Cardiac septum (tissue), 1 donor: ENCODE measurements at regions of chr4 and their contacts with region 1.

Region 1: DNA sequence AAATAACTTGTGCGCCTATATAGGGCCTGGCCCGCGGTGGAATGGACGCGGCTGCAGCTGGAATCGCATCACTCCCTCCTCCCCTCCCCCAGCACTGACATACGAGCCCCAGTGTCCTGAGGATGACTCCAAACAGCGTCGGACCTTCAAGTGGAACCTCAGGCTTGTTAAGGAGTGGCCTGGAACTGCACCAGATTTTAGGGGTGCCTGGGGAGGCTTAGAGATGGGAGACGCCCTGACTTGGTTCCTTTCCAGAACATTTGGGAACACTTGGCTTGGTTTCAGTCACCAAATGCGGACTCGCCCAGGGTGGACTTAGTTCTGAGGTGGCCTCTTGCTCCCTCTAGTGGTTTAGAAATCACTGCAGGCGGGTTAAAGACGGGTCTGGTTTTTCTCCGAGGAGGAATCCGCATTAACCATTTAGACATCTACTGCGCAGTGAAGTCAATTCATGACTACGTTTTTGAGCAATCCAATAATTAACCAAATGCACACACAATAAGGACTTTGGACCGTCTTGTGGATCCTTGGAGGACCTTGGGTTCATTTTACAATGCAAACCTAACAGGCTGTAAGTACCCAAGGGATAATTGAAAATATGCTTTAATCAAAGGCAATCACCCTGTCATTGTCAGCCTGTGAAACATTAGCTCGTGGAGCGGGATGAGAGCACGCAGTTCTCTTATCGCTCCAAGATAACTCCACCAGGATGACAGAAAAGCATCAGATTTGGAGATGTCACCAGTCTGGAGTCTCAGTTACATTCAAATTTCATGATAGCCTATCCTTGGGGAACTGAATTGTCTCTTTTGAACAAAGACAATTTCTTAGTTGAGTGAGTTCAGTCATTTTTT is 11.2 kb upstream of the PDGFRA start:
- DNase-seq: peak; percentile 78

Region 2: DNA sequence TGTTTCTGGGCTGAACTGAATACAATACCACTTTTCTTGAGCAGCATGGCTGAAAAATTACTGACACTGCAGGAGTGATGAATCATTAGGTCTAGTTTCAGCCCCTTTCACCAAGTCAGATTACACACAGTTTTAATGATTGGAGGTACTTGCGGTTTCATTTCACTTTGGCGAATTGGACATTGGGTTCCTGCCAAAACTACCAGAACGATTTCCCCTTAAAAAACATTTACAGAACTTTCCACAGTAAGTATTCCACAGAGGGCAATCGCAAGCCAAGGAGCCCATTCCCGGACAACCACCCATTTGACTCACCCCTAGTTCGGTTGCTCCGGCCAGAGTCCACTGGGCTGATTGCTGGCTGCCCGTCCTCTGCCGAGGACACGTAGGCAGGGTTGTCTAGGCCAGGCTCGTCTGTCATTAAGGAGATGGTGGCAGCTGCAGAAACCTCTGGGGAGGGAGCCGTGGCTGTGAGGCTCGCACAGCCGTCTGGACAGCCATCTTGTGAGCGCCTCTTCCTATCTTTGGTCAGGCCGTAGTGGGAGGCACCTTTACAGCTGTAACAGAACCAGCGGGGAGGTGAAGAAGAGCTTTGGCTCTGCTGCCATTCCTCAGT is 710.1 kb before region 1 on chr4:
- intact Hi-C with region 1: loop called (anchors 5 kb)
- DNase-seq: peak; percentile 80

Region 3: DNA sequence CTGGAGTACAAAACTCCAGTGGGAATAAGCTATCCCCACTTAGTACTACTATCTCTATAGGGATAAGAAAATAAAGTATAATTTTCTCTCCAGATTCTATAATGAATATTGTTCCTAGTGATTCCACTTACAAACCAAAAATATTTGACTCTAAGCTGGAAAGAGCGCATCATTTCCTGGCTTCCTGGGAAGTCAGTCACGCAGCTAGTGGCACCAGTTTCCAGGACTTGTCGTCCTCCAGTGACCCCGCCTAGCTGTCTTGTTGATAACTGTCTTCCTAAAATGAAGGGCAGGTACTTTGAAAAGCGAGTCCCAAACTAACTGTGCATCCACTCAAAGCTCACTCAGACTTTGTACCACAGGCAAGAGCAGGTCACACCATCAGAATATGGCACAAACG is 665.9 kb before region 1 on chr4:
- intact Hi-C with region 1: no loop called
- DNase-seq: no peak

Region 4: GRCh38 chr4:53908661-53909078 is 309.2 kb before region 1 on chr4:
- intact Hi-C with region 1: loop called (anchors 2 kb)
- DNase-seq: no peak

Region 5: GRCh38 chr4:54064295-54065111 is 153.4 kb before region 1 on chr4 and contains the start of gene CHIC2:
- intact Hi-C with region 1: loop called (anchors 5 kb)
- DNase-seq: peak; percentile 98
- total RNA-seq, gene CHIC2: 12.4 TPM